H1 (cell line): ENCODE measurements at regions of chr13 and their contacts with region 1.

Region 1: DNA sequence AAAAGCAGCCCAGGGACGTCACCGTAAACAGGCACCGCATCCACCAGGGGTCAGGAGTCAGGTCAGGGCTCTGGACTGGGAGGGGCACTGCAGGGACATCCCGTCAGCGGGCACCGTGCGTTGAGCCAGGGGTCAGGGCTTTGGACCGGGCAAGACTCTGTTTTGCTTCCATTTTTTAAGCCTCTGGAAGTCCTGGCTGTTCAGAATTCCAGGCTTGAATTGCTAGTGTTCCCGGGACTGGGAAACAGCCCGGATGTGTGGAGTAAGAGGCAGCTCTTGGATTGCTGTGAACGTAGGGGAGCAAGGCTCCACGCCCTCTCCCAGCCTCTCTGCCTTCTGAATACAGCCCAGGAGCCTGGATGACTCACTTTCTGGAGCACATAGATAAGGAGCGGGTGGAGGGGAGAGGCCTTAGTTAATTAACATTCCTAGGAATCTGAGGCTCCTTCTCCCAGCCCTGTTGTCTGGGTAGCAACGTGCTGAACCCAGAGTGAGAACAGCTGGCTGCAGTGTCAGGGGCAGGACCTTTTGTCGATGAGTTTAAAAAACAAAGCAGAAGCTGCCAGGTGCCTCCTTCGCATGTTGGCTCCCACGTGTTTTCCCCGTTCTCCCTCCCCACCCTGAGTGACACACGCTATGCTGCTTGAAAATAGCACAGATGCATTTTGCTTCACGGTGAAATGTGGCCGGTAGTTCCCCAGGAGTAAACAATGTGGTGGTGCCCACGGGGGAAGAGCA is 21.9 kb downstream of the ATP11A start:
- DNase-seq: peak; percentile 74 to 86
- H3K4me3 ChIP-seq: peak overlapping the region in 3 of 4 experiments; percentile 31 to 42 (median 36); a peak in 6 of 8 replicates
- H3K27ac ChIP-seq: peak overlapping the region; percentile 87
- H3K4me1 ChIP-seq: peaks cover 13 to 48% (median 20%) of the 10 kb centered on the region in 4 experiments
- H3K27me3 ChIP-seq: no peaks in the 10 kb centered on the region
- CTCF ChIP-seq: peak in 2 of 3 experiments; percentile 40 to 59; a peak in 3 of 4 replicates
- EP300 ChIP-seq: no peak
- POLR2A ChIP-seq: peak in 1 of 2 experiments; percentile 71; a peak in 2 of 3 replicates
- RAD21 ChIP-seq: peak; percentile 34 to 45; a peak in 3 of 4 replicates

Region 2: DNA sequence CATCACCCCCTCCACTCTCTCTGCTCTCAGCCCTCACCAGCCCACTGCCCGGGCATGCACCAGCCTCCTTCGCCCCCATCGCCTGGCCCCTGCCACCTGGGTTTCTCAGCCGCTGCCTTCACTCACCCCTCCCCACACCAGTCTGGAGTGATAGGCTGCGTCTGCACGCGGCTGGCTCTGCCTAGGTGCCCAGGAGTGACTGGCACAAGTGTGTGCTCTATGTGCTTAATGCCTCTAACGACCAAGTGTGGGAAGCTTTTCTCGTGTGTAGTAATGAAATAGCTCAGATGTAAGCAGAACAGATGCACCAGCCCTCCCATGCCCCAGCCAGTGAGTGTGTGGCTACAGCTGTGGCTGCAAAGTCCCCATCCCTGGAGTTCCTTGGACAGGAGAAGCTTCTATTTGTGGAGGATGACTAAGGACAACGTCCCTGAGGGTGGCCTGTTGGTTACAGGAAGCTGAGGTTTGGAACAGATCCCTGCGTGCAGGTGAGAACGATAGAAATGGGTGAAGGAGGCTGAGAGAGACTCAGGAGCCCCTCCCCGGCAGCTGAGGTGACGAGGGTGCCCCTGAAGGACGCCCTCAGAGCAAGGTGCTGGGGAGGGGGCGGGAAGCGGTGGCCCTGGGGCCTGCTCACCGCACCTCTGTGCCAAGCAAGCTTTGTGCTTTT is 13.8 kb after region 1 on chr13:
- CTCF ChIA-PET with region 1: interaction called, 13 read pairs
- POLR2A ChIA-PET with region 1: interaction called, 19 read pairs
- DNase-seq: no peak
- H3K4me3 ChIP-seq: no peak overlapping the region
- H3K27ac ChIP-seq: no peak overlapping the region
- H3K4me1 ChIP-seq: peaks cover 3 to 38% (median 21%) of the 10 kb centered on the region in 4 experiments
- H3K27me3 ChIP-seq: no peaks in the 10 kb centered on the region
- CTCF ChIP-seq: no peak
- EP300 ChIP-seq: no peak
- POLR2A ChIP-seq: no peak
- RAD21 ChIP-seq: no peak

Region 3: GRCh38 chr13:112733661-112734379 is 22.1 kb after region 1 on chr13:
- CTCF ChIA-PET with region 1: interaction called, 6 read pairs
- POLR2A ChIA-PET with region 1: interaction called, 12 read pairs
- DNase-seq: no peak
- H3K4me3 ChIP-seq: peak overlapping the region in 1 of 4 experiments; percentile 33; a peak in 1 of 8 replicates
- H3K27ac ChIP-seq: peak overlapping the region; percentile 37; the same call in 1 of the 2 replicates
- H3K4me1 ChIP-seq: peaks cover 13 to 47% (median 21%) of the 10 kb centered on the region in 4 experiments
- H3K27me3 ChIP-seq: no peaks in the 10 kb centered on the region
- CTCF ChIP-seq: no peak
- EP300 ChIP-seq: peak in 1 of 2 experiments; percentile 78; a peak in 1 of 3 replicates
- POLR2A ChIP-seq: peak in 1 of 2 experiments; percentile 18; a peak in 2 of 3 replicates
- RAD21 ChIP-seq: 0 out of 4 replicates have a peak, but pooled peaks of 1 of the 2 experiments have one; percentile 1

Region 4: GRCh38 chr13:112873851-112874750 is 162.4 kb after region 1 on chr13:
- CTCF ChIA-PET with region 1: interaction called, 13 read pairs
- POLR2A ChIA-PET with region 1: no interaction called
- DNase-seq: peak; percentile 33 to 97
- H3K4me3 ChIP-seq: no peak overlapping the region
- H3K27ac ChIP-seq: 0 out of 2 replicates have a peak overlapping the region, but pooled peaks have one; percentile 3
- H3K4me1 ChIP-seq: 0 out of 7 replicates have a peak, but pooled peaks cover 0 to 4% (median under 1%) of the 10 kb centered on the region in 4 experiments
- H3K27me3 ChIP-seq: no peaks in the 10 kb centered on the region
- CTCF ChIP-seq: peak in 2 of 3 experiments; percentile 88 to 94; a peak in 3 of 4 replicates
- EP300 ChIP-seq: no peak
- POLR2A ChIP-seq: no peak
- RAD21 ChIP-seq: peak; percentile 91 to 93